Tibial artery (tissue), 4 donors: ENCODE measurements at regions of chr10 and their contacts with region 1.

Region 1: GRCh38 chr10:63720072-63720537 is 198.9 kb downstream of the REEP3 start:
- DNase-seq: peak in 1 of 2 donors; percentile 47
- H3K4me3 ChIP-seq: no peak overlapping the region
- H3K27ac ChIP-seq: peak overlapping the region; percentile 77 to 80
- H3K4me1 ChIP-seq: peaks cover 0 to 32% (median 20%) of the 10 kb centered on the region in 4 donors
- H3K27me3 ChIP-seq: no peaks in the 10 kb centered on the region
- CTCF ChIP-seq: peak; percentile 84 to 95

Region 2: DNA sequence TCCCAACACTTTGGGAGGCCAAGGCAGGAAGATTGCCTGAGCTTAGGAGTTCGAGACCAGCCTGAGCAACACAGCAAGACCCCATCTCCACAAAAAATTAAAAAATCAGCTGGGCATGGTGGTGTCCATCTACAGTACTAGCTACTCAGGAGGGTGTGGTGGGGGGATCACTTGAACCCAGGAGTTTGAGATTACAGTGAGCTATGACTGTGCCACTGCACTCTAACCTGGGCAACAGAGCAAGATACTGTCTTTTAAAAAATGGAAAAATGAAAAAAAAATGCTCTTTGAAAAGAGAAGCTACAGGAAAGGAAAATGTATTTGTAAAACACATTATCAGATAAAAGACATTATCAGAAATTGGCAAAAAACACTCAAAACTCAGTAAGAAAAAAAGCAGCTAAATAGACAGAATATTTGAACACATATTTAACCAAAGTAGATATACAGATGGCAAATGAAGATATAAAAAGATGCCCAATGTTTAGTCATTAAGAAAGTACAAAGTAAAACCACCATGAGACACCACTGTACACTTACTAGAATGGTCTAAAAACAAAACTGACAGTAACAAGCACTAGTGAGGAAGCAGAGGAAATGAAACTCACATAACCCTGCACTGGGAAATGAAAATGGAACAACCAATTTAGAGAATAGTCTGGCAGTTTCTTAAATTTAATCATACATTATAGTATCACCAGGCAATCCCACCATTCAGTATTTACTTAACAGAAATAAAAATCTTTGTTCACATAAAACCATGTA is 546.5 kb before region 1 on chr10:
- intact Hi-C with region 1: loop called (anchors 5 kb)
- DNase-seq: no peak
- H3K4me3 ChIP-seq: no peak overlapping the region
- H3K27ac ChIP-seq: no peak overlapping the region
- H3K4me1 ChIP-seq: peaks cover 0 to 9% (median 2%) of the 10 kb centered on the region in 4 donors
- H3K27me3 ChIP-seq: no peaks in the 10 kb centered on the region
- CTCF ChIP-seq: no peak

Region 3: GRCh38 chr10:63217120-63217605 is 502.9 kb before region 1 on chr10:
- intact Hi-C with region 1: loop called (anchors 5 kb)
- DNase-seq: no peak
- H3K4me3 ChIP-seq: no peak overlapping the region
- H3K27ac ChIP-seq: no peak overlapping the region
- H3K4me1 ChIP-seq: peaks cover 0 to 16% (median 0%) of the 10 kb centered on the region in 4 donors
- H3K27me3 ChIP-seq: no peaks in the 10 kb centered on the region
- CTCF ChIP-seq: peak; percentile 67 to 77

Region 4: DNA sequence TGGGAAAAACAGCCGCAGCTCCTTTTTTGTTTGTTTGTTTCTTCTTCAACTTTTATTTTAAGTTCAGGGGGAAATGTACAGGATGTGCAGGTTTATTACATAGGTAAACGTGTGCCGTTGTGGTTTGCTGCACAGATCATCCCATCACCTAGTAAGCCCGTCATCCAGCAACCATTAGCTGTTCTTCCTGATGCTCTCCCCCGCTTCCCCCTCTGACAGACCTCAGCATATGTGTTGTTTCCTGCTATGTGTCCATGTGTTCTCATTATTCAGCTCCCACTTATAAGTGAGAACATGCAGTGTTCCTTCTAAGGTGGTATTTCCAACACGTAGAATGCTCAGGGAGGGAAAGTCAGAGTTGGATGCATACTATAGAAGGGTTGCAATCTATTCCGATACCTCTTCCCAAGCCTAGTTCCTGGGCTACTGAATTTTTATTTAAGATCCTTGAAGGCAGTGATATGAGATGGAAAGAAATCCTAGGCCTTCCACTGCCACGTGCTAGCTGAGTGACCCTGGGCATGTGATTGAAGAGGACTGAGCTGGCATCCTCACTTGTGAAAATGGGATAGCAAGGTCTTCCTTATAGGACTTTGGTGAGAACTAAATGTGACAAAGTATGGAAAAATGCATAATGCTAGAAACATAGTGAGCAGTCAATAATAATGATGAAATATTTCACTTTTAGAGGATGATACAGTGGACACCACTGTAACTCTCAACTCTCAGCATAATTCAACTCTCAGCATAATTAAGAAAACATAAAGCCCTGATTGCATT is 79.6 kb after region 1 on chr10:
- intact Hi-C with region 1: loop called (anchors 5 kb)
- DNase-seq: no peak
- H3K4me3 ChIP-seq: peak overlapping the region; percentile 17 to 28
- H3K27ac ChIP-seq: peak overlapping the region; percentile 59 to 68
- H3K4me1 ChIP-seq: peaks cover 0 to 30% (median 3%) of the 10 kb centered on the region in 4 donors
- H3K27me3 ChIP-seq: no peaks in the 10 kb centered on the region
- CTCF ChIP-seq: no peak